Aorta (tissue), 5 donors: ENCODE measurements at regions of chr7 and their contacts with region 1.

Region 1: GRCh38 chr7:17370092-17370491 is 71.6 kb downstream of the AHR start:
- DNase-seq: no peak
- ATAC-seq: peak; percentile 45
- H3K4me3 ChIP-seq: no peak overlapping the region
- H3K27ac ChIP-seq: no peak overlapping the region
- H3K4me1 ChIP-seq: peaks cover 6 to 14% of the 10 kb centered on the region in 2 donors
- H3K27me3 ChIP-seq: no peaks in the 10 kb centered on the region

Region 2: GRCh38 chr7:16695621-16696237 is 674.4 kb before region 1 on chr7:
- intact Hi-C with region 1: no loop called
- DNase-seq: no peak
- ATAC-seq: no peak
- H3K4me3 ChIP-seq: no peak overlapping the region
- H3K27ac ChIP-seq: no peak overlapping the region
- H3K4me1 ChIP-seq: peaks cover 4 to 5% of the 10 kb centered on the region in 2 donors
- H3K27me3 ChIP-seq: no peaks in the 10 kb centered on the region

Region 3: DNA sequence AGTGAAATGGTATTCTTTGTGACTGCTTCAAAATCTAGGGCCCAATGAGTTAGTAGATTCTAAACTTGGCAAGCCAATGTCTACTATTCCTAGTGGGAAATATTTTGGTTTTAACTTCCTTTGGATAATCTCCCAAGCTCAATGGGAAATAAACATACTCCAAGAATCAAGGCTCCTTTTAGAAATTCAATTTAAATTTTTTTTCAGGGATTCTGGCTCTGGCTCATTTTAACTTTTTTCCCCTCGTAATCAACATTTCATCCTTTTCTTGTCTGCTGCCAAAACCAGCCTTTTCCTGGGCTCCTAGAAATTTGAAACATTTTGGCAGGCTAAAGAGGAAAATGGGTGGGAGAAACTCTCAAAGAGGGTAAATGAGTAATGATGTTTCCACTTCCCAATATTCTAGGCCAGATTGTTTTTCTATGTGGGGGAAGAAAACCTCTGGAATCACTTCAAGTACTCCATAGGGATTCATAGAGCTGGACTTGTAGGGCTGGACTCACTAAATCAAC is 402.7 kb before region 1 on chr7:
- intact Hi-C with region 1: loop called (anchors 5 to 10 kb)
- DNase-seq: no peak
- ATAC-seq: peak; percentile 85
- H3K4me3 ChIP-seq: no peak overlapping the region
- H3K27ac ChIP-seq: no peak overlapping the region
- H3K4me1 ChIP-seq: peaks cover 3 to 6% of the 10 kb centered on the region in 2 donors
- H3K27me3 ChIP-seq: no peaks in the 10 kb centered on the region

Region 4: GRCh38 chr7:17546599-17546998 is 176.5 kb after region 1 on chr7:
- intact Hi-C with region 1: no loop called
- DNase-seq: no peak
- ATAC-seq: peak; percentile 62
- H3K4me3 ChIP-seq: no peak overlapping the region
- H3K27ac ChIP-seq: no peak overlapping the region
- H3K4me1 ChIP-seq: peaks cover 0 to 2% of the 10 kb centered on the region in 2 donors
- H3K27me3 ChIP-seq: no peaks in the 10 kb centered on the region